Right cardiac atrium (tissue), 5 donors: ENCODE measurements at regions of chr6 and their contacts with region 1.

Region 1: GRCh38 chr6:141562851-141563763 is 569.6 kb upstream of the GJE1 start:
- DNase-seq: peak; percentile 58 to 71 (median 70)
- ATAC-seq: peak; percentile 93 to 94
- H3K4me3 ChIP-seq: peak overlapping the region; percentile 62
- H3K27ac ChIP-seq: no peak overlapping the region
- H3K4me1 ChIP-seq: no peaks in the 10 kb centered on the region
- H3K27me3 ChIP-seq: no peaks in the 10 kb centered on the region

Region 2: GRCh38 chr6:141464490-141464889 is 98.6 kb before region 1 on chr6:
- intact Hi-C with region 1: loop called in 1 of 4 experiments (anchors 10 kb)
- DNase-seq: no peak
- ATAC-seq: peak; percentile 80 to 83
- H3K4me3 ChIP-seq: no peak overlapping the region
- H3K27ac ChIP-seq: no peak overlapping the region
- H3K4me1 ChIP-seq: peaks cover 3% of the 10 kb centered on the region
- H3K27me3 ChIP-seq: no peaks in the 10 kb centered on the region

Region 3: GRCh38 chr6:141783585-141783984 is 220.5 kb after region 1 on chr6:
- intact Hi-C with region 1: no loop called
- DNase-seq: peak in 1 of 3 donors; percentile 10
- ATAC-seq: peak; percentile 44 to 83
- H3K4me3 ChIP-seq: no peak overlapping the region
- H3K27ac ChIP-seq: no peak overlapping the region
- H3K4me1 ChIP-seq: no peaks in the 10 kb centered on the region
- H3K27me3 ChIP-seq: no peaks in the 10 kb centered on the region